ENCODE measurements at regions of chr3 and their contacts with region 1.

Region 1: DNA sequence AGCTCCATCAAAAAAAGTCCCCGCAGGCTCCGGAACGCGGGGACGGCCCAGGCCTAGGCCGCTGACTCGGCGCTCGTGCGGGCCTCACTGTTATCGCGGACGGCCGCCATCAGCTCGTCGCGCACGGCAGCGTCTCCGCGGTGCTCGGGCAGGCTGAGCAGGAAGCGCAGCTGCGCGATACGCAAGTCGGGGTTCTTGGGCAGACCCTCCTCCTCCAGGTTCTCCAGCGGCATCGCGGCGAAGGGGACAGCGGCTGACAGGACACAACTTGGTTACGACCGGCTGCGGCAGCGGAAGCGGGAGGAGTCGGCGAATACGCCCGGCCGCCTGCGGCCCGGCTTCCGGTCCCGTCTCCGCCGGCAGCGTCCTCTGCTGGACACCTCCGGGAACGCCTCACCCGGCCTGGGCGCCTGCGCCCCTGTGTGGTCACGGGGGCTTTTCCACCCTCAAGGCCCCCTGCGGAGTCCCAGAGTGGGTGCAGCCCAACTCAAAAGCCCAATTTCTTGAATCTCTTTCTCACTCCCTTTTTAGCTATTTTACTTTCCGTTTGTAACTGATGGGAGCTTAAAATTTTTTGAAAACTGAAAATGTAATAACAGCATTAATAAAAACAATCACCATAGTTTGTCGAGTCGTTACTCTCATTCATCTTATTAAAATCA is at the start of gene PSMD6:
- DNase-seq: peak; percentile 54 to 85
- ATAC-seq: peak; percentile 96 to 97
- H3K4me3 ChIP-seq: peak within 1 kb of the TSS; percentile 92
- H3K27ac ChIP-seq: peak within 1 kb of the TSS; percentile 84 to 96
- H3K4me1 ChIP-seq: peaks cover 10% of the 10 kb centered on the region; the same call in 2 of the 3 replicates
- CTCF ChIP-seq: peak; percentile 90
- EP300 ChIP-seq: no peak
- POLR2A ChIP-seq: peak; percentile 59
- RAD21 ChIP-seq: peak; percentile 36 to 62
- polyA plus RNA-seq, gene PSMD6: 53.8 and 76.8 TPM in 2 replicates

Region 2: DNA sequence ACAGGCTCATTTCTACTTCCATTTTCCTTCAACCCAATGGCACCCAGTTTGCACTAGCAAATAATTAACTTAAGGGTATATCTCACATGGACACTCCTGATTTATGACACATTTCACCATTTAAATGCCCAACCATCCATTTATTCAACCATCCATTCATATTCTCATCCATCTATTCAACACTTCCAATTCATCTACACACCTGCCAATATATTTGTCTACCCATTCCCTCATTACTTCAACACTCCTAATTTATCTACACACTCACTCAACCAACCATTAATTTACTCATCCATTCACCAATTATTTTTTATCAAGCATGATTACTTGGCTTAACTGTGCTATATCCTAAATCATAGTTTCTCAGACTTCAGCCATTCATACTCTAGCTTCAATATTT is 831.8 kb before region 1 on chr3:
- CTCF ChIA-PET with region 1: no interaction called
- POLR2A ChIA-PET with region 1: no interaction called
- DNase-seq: no peak
- ATAC-seq: no peak
- H3K4me3 ChIP-seq: no peak overlapping the region
- H3K27ac ChIP-seq: no peak overlapping the region
- H3K4me1 ChIP-seq: no peaks in the 10 kb centered on the region
- CTCF ChIP-seq: no peak
- EP300 ChIP-seq: no peak
- POLR2A ChIP-seq: no peak
- RAD21 ChIP-seq: no peak

Region 3: DNA sequence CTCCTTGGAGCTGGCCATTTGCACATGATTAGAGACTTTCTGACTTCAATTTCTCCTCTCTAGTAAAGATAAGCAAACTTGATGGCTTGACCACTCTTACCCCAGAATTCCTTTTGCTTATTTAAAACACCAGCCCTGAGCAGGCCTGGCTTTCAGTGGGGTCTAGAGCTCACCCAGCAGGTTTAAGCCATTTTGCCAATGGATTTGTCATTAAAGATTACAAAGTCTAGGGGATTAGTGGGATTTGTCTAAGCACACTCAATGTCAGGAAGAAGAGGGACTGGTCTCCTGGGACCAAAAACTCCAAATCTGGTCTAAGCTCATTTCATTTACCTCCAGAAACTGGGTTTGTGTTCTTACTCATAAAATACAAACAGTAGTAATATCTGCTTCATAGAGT is 428.1 kb before region 1 on chr3:
- CTCF ChIA-PET with region 1: no interaction called
- POLR2A ChIA-PET with region 1: no interaction called
- DNase-seq: no peak
- ATAC-seq: no peak
- H3K4me3 ChIP-seq: no peak overlapping the region
- H3K27ac ChIP-seq: no peak overlapping the region
- H3K4me1 ChIP-seq: no peaks in the 10 kb centered on the region
- CTCF ChIP-seq: no peak
- EP300 ChIP-seq: no peak
- POLR2A ChIP-seq: no peak
- RAD21 ChIP-seq: no peak

Region 4: GRCh38 chr3:63993653-63994079 is 29.7 kb before region 1 on chr3:
- CTCF ChIA-PET with region 1: interaction called, 10 read pairs
- POLR2A ChIA-PET with region 1: no interaction called
- DNase-seq: peak; percentile 64 to 68
- ATAC-seq: peak; percentile 99
- H3K4me3 ChIP-seq: no peak overlapping the region
- H3K27ac ChIP-seq: no peak overlapping the region
- H3K4me1 ChIP-seq: no peaks in the 10 kb centered on the region
- CTCF ChIP-seq: peak; percentile 56
- EP300 ChIP-seq: no peak
- POLR2A ChIP-seq: no peak
- RAD21 ChIP-seq: peak; percentile 62 to 73

Region 5: GRCh38 chr3:64011685-64012084 is 11.6 kb before region 1 on chr3:
- CTCF ChIA-PET with region 1: interaction called, 11 read pairs
- POLR2A ChIA-PET with region 1: no interaction called
- DNase-seq: no peak
- ATAC-seq: peak in 1 of 2 experiments; percentile 36; a peak in 1 of 6 replicates
- H3K4me3 ChIP-seq: no peak overlapping the region
- H3K27ac ChIP-seq: no peak overlapping the region
- H3K4me1 ChIP-seq: peaks cover 7% of the 10 kb centered on the region; the same call in 1 of the 3 replicates
- CTCF ChIP-seq: no peak
- EP300 ChIP-seq: no peak
- POLR2A ChIP-seq: no peak
- RAD21 ChIP-seq: no peak

Region 6: GRCh38 chr3:64049136-64049535 is 25.8 kb after region 1 on chr3:
- CTCF ChIA-PET with region 1: interaction called, 11 read pairs
- POLR2A ChIA-PET with region 1: no interaction called
- DNase-seq: peak in 1 of 2 experiments; percentile 45
- ATAC-seq: peak; percentile 59 to 80; a peak in 4 of 6 replicates
- H3K4me3 ChIP-seq: no peak overlapping the region
- H3K27ac ChIP-seq: peak overlapping the region; percentile 53 to 78; a peak in 5 of 6 replicates
- H3K4me1 ChIP-seq: peaks cover 33% of the 10 kb centered on the region
- CTCF ChIP-seq: no peak
- EP300 ChIP-seq: no peak
- POLR2A ChIP-seq: no peak
- RAD21 ChIP-seq: no peak

Region 7: DNA sequence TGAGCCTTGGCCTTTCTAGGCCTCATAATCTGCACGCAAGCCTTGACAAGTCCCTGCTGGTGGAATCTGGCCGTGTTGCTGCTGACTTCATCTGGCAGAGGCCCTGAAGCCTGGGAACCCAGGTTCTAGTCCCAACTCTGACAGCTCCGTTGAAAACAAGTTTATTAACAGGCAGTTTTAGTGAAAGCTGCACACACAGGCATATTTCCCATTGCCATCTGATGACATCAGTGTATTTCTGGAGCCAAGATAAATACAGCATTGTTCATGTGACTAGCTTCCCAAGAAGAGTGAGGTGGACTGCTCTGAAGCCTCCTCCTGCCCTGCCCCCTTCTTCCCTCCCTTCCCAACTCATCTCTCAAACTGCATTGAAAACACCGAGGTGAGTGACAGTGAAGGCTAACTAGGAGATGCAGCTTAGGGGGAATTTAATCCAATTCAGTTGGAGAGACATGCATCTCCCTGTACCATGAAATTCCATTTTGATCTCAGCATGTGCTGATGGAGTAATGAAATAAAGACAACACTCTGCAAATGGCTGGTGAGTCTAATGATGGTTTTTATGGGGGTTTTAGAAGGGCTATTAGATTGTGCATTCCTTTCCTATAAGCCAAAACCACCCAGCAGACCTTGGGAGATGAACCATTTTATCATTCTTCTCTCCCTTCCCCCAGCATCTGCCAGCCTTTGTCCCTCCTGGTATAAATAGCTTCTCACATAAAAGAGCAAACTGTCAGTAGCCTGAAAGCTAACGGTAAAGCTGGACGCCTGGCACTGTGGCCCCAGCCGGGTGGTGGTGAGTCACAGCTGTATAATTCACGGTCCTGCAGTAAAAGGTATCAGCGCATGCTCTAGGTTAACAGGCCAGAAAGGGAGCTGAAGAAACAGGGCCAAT is 164.0 kb after region 1 on chr3:
- CTCF ChIA-PET with region 1: interaction called, 13 read pairs
- POLR2A ChIA-PET with region 1: no interaction called
- DNase-seq: peak; percentile 64 to 88
- ATAC-seq: peak; percentile 83 to 84
- H3K4me3 ChIP-seq: peak overlapping the region; percentile 26; the same call in 2 of the 3 replicates
- H3K27ac ChIP-seq: peak overlapping the region; percentile 83 to 92
- H3K4me1 ChIP-seq: peaks cover 85% of the 10 kb centered on the region
- CTCF ChIP-seq: no peak
- EP300 ChIP-seq: peak in 1 of 2 experiments; percentile 59; a peak in 2 of 5 replicates
- POLR2A ChIP-seq: no peak
- RAD21 ChIP-seq: no peak

Region 8: GRCh38 chr3:64224826-64225610 is 201.7 kb after region 1 on chr3 and contains the start of gene PRICKLE2:
- CTCF ChIA-PET with region 1: interaction called, 15 read pairs
- POLR2A ChIA-PET with region 1: no interaction called
- DNase-seq: peak; percentile 69 to 90
- ATAC-seq: peak; percentile 88 to 92
- H3K4me3 ChIP-seq: peak within 1 kb of the TSS; percentile 70
- H3K27ac ChIP-seq: peak within 1 kb of the TSS; percentile 91 to 93
- H3K4me1 ChIP-seq: peaks cover 33% of the 10 kb centered on the region
- CTCF ChIP-seq: peak; percentile 37
- EP300 ChIP-seq: no peak
- POLR2A ChIP-seq: peak; percentile 19; the same call in 1 of the 2 replicates
- RAD21 ChIP-seq: peak; percentile 54 to 64
- polyA plus RNA-seq, gene PRICKLE2: 6.3 and 8.0 TPM in 2 replicates